RWPE1 (cell line): ENCODE measurements at regions of chr14 and their contacts with region 1.

Region 1: GRCh38 chr14:63852817-63853731 is at the start of gene SYNE2:
- DNase-seq: peak; percentile 79
- H3K27ac ChIP-seq: peak within 1 kb of the TSS; percentile 95
- CTCF ChIP-seq: peak; percentile 31; the same call in 1 of the 2 replicates

Region 2: DNA sequence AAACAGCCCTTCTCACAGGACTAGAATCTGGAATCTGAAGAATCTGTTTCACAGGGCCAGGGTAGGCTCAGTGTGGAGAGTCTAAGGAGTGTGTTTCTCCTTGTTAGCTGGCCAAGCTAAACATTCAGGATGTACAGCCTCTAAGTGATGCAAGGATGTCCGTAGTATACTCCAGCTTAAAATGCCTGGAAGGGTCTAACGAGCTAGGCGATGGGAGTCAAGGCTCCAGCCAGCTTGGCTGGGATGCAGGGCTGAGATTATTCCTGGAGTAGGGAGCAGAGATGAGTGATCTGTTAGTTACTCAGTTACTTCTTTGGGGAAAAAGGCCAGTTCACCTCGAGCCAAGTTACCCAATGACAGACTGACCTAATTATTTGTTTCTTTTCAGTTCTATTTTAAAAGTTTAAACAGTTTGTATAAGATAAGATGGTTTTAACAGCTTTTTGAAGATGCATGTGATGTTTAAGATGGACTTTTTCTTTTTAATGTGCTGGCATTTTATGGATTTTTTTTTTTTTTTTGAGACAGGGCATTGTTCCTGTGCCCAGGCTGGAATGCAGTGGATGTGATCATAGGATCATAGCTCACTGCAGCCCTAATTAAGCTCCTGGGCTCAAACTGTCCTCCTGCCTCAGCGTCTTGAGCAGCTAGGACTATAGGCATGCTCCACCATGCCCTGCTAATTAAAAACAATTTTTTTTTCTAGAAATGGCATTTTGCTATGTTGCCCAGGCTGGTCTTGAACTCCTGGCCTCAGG is 40.8 kb after region 1 on chr14:
- CTCF ChIA-PET with region 1: interaction called, 10 read pairs
- POLR2A ChIA-PET with region 1: no interaction called
- DNase-seq: no peak
- H3K27ac ChIP-seq: peak overlapping the region; percentile 82
- CTCF ChIP-seq: no peak